ENCODE measurements at regions of chr20 and their contacts with region 1.

Region 1: DNA sequence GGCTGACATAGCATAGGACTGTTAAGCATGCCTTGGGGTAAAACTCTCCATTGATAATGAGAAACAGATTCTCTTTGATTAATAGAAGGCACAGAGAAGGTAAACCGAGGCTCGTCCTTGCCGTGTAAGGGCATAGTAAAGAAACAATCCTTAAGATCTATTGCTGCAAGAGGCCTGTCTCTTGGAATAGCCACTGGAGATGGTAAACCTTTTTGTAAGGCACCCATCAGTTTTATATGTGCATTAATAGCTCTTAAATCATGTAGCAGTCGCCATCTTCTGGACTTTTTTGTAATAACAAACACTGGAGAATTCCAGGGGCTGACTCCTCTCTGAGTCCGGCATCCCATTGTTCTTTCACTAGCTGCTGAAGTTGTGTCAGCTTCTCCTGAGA is 8.4 kb upstream of the ABHD12 start:
- DNase-seq: peak in 7 of 9 donors; percentile 14 to 48 (median 28)
- ATAC-seq: peak; percentile 59
- H3K4me3 ChIP-seq: no peak overlapping the region
- H3K4me3 Mint-ChIP-seq: no peak overlapping the region
- H3K27ac ChIP-seq: no peak overlapping the region
- H3K27ac Mint-ChIP-seq: no peak overlapping the region
- H3K4me1 ChIP-seq: no peaks in the 10 kb centered on the region
- H3K4me1 Mint-ChIP-seq: peaks cover 0 to 6% (median 0%) of the 10 kb centered on the region in 7 donors
- H3K27me3 ChIP-seq: no peaks in the 10 kb centered on the region
- H3K27me3 Mint-ChIP-seq: peaks cover 0 to 19% (median 0%) of the 10 kb centered on the region in 5 donors

Region 2: DNA sequence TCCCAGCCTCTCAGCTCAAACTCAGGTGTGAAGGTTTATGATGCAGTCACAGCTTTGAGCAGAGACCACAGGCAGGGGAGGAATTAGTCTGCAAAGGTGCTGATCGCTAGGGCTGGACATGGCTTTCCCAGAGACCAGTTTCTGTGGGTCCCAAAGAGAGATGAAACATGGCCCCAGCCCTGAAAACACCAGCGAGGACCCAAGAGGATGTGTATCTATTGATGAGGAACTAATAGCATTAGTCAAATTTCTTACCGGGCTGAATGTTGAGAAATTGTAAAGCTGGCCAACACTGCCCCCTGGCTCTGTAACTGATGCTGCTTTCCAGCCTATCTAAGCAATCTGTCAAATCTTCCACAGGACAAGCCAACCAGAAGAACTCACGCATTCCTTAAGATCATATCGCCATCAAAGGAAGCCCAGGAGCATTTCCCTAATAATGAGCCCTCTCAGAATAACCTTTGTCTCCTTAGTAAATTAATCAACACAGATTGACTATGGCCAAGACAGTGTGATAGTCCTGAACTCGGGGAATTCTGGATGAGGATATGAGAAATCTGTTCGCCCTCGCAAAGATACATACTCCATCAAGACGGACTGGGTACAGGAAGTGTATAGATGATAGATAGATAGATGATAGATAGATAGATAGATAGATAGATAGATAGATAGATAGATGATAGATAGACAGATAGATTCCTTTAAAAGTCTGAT is 333.3 kb before region 1 on chr20:
- CTCF ChIA-PET with region 1: interaction called, 3 read pairs
- POLR2A ChIA-PET with region 1: no interaction called
- intact Hi-C with region 1: loop called in 1 of 2 experiments (anchors 1 kb)
- DNase-seq: peak in 8 of 9 donors; percentile 37 to 72 (median 68)
- ATAC-seq: peak; percentile 87
- H3K4me3 ChIP-seq: no peak overlapping the region
- H3K4me3 Mint-ChIP-seq: no peak overlapping the region
- H3K27ac ChIP-seq: no peak overlapping the region
- H3K27ac Mint-ChIP-seq: no peak overlapping the region
- H3K4me1 ChIP-seq: no peaks in the 10 kb centered on the region
- H3K4me1 Mint-ChIP-seq: peaks cover 0 to 8% (median 5%) of the 10 kb centered on the region in 7 donors
- H3K27me3 ChIP-seq: no peaks in the 10 kb centered on the region
- H3K27me3 Mint-ChIP-seq: peaks cover 0 to 51% (median 18%) of the 10 kb centered on the region in 5 donors

Region 3: GRCh38 chr20:25081065-25081729 is 317.8 kb before region 1 on chr20:
- CTCF ChIA-PET with region 1: no interaction called
- POLR2A ChIA-PET with region 1: no interaction called
- intact Hi-C with region 1: loop called in 1 of 2 experiments (anchors 2 kb)
- DNase-seq: peak in 6 of 9 donors; percentile 20 to 63 (median 49)
- ATAC-seq: peak; percentile 64
- H3K4me3 ChIP-seq: no peak overlapping the region
- H3K4me3 Mint-ChIP-seq: peak overlapping the region in 4 of 10 donors; percentile 19 to 35 (median 24)
- H3K27ac ChIP-seq: no peak overlapping the region
- H3K27ac Mint-ChIP-seq: no peak overlapping the region
- H3K4me1 ChIP-seq: peaks cover 14 to 21% of the 10 kb centered on the region in 2 donors
- H3K4me1 Mint-ChIP-seq: peaks cover 11 to 37% (median 27%) of the 10 kb centered on the region in 7 donors
- H3K27me3 ChIP-seq: peaks cover 23 to 25% of the 10 kb centered on the region in 2 donors
- H3K27me3 Mint-ChIP-seq: peaks cover 67 to 88% (median 74%) of the 10 kb centered on the region in 5 donors

Region 4: DNA sequence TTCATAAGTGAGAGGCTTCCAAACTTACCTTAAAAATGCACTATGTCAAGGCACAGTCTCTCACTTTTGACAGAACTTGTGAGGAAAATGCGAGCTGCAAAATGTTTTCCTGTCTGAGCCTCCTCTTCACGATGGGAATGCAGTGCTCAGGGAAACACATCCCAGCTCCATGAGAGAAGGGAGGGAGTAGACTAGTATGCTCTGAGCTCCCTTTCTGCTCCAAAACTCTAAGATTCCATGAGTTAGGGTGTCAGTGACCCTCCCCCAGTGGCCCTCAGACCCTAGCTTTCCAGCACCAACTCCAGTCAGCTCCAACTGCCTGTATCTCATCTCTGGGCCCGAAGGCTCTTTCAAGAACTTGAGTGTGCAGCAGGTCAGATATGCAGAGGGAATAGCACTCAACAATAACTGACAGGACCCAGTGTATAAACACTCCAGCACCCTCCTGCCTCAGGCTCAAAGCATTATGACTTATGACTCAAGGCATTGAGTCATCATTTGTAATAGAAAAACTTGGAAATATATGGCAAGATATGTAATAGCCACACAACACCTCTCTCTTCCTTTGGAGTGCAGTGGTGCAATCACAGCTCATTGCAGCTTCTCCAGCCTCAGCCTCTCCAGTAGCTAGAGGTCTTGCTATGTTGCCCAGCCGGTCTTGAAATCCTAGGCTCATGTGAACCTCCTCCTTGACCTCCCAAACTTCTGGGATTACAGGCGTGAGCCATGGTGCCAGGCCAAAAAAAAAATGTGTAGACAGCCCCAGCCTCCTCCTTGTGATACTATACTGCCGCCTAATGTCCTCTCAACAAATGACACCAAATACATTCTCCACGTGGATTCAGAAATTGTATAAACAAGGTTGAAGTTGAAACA is 220.2 kb before region 1 on chr20:
- CTCF ChIA-PET with region 1: no interaction called
- POLR2A ChIA-PET with region 1: no interaction called
- intact Hi-C with region 1: loop called in 1 of 2 experiments (anchors 1 kb)
- DNase-seq: peak in 6 of 9 donors; percentile 21 to 52 (median 46)
- ATAC-seq: peak; percentile 82
- H3K4me3 ChIP-seq: no peak overlapping the region
- H3K4me3 Mint-ChIP-seq: no peak overlapping the region
- H3K27ac ChIP-seq: no peak overlapping the region
- H3K27ac Mint-ChIP-seq: peak overlapping the region in 1 of 9 donors; percentile 38
- H3K4me1 ChIP-seq: no peaks in the 10 kb centered on the region
- H3K4me1 Mint-ChIP-seq: no peaks in the 10 kb centered on the region
- H3K27me3 ChIP-seq: no peaks in the 10 kb centered on the region
- H3K27me3 Mint-ChIP-seq: peaks cover 4 to 27% (median 7%) of the 10 kb centered on the region in 5 donors

Region 5: GRCh38 chr20:25294459-25295385 is 104.3 kb before region 1 on chr20:
- CTCF ChIA-PET with region 1: interaction called, 19 read pairs
- POLR2A ChIA-PET with region 1: no interaction called
- intact Hi-C with region 1: loop called (anchors 1 kb)
- DNase-seq: peak; percentile 43 to 74 (median 59)
- ATAC-seq: peak; percentile 90
- H3K4me3 ChIP-seq: no peak overlapping the region
- H3K4me3 Mint-ChIP-seq: no peak overlapping the region
- H3K27ac ChIP-seq: no peak overlapping the region
- H3K27ac Mint-ChIP-seq: peak overlapping the region in 5 of 9 donors; percentile 29 to 78 (median 57)
- H3K4me1 ChIP-seq: no peaks in the 10 kb centered on the region
- H3K4me1 Mint-ChIP-seq: peaks cover 0 to 12% (median 3%) of the 10 kb centered on the region in 7 donors
- H3K27me3 ChIP-seq: no peaks in the 10 kb centered on the region
- H3K27me3 Mint-ChIP-seq: no peaks in the 10 kb centered on the region

Region 6: DNA sequence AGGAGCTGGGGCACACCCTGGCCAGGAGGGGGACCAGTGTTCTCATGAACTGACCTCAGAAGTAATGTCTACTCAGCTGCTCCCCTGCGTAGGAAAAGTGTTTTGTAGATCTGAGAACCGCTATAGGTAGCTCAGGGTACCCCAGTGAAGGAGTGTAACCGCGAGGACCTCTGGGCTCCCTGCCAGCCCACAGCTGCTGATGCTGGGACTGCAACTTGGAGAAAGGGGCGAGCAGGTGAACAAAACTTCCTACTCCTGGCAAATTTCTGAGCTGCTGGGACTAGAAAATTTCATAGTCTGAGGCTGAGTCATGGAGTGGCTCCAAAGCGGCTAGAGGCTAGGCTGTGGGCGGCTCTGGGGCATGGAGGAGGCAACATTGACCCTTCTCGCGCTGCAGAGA is 99.2 kb before region 1 on chr20:
- CTCF ChIA-PET with region 1: interaction called, 19 read pairs
- POLR2A ChIA-PET with region 1: no interaction called
- intact Hi-C with region 1: no loop called
- DNase-seq: no peak
- ATAC-seq: no peak
- H3K4me3 ChIP-seq: no peak overlapping the region
- H3K4me3 Mint-ChIP-seq: no peak overlapping the region
- H3K27ac ChIP-seq: no peak overlapping the region
- H3K27ac Mint-ChIP-seq: peak overlapping the region in 5 of 9 donors; percentile 4 to 74 (median 66)
- H3K4me1 ChIP-seq: no peaks in the 10 kb centered on the region
- H3K4me1 Mint-ChIP-seq: peaks cover 0 to 6% (median 0%) of the 10 kb centered on the region in 7 donors
- H3K27me3 ChIP-seq: no peaks in the 10 kb centered on the region
- H3K27me3 Mint-ChIP-seq: no peaks in the 10 kb centered on the region

Region 7: GRCh38 chr20:25310268-25310920 is 88.6 kb before region 1 on chr20:
- CTCF ChIA-PET with region 1: no interaction called
- POLR2A ChIA-PET with region 1: no interaction called
- intact Hi-C with region 1: loop called (anchors 1 kb)
- DNase-seq: peak in 4 of 9 donors; percentile 12 to 64 (median 18)
- ATAC-seq: peak; percentile 87
- H3K4me3 ChIP-seq: peak overlapping the region; percentile 18
- H3K4me3 Mint-ChIP-seq: peak overlapping the region; percentile 8 to 88 (median 76)
- H3K27ac ChIP-seq: peak overlapping the region; percentile 31
- H3K27ac Mint-ChIP-seq: peak overlapping the region; percentile 68 to 97 (median 85)
- H3K4me1 ChIP-seq: peaks cover 3 to 8% of the 10 kb centered on the region in 2 donors
- H3K4me1 Mint-ChIP-seq: peaks cover 15 to 38% (median 20%) of the 10 kb centered on the region in 7 donors
- H3K27me3 ChIP-seq: no peaks in the 10 kb centered on the region
- H3K27me3 Mint-ChIP-seq: no peaks in the 10 kb centered on the region

Measured in naive thymus-derived CD4-positive, alpha-beta T cell (primary cell).